ENCODE measurements at regions of chr2 and their contacts with region 1.

Region 1: DNA sequence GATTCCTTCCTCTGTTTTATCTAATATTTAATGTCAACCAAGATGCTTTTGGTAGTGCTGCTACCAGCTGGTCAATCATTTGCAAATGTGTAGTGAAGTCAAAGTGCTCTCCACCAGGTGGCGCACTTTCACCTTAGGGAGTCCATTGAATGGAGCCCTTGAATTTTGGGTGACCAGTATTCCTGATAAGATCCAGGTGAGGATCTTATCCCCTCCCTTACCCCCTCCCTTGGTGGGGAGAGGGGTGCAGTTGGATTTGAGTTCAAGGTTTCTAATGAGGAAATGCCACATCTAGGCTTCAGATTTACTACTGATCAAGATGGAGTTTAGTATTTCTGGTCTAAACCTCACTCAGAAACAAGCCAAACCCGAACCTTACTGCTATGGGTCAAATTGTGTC is 12.0 kb upstream of the E2F6 start:
- DNase-seq: peak; percentile 65
- H3K4me3 Mint-ChIP-seq: no peak overlapping the region
- H3K27ac Mint-ChIP-seq: no peak overlapping the region
- H3K4me1 Mint-ChIP-seq: peaks cover under 1% of the 10 kb centered on the region
- H3K27me3 Mint-ChIP-seq: peaks cover 29% of the 10 kb centered on the region

Region 2: GRCh38 chr2:11553661-11554398 is 75.8 kb after region 1 on chr2:
- intact Hi-C with region 1: no loop called
- DNase-seq: no peak
- H3K4me3 Mint-ChIP-seq: no peak overlapping the region
- H3K27ac Mint-ChIP-seq: no peak overlapping the region
- H3K4me1 Mint-ChIP-seq: peaks cover 6% of the 10 kb centered on the region
- H3K27me3 Mint-ChIP-seq: peaks cover 37% of the 10 kb centered on the region

Region 3: DNA sequence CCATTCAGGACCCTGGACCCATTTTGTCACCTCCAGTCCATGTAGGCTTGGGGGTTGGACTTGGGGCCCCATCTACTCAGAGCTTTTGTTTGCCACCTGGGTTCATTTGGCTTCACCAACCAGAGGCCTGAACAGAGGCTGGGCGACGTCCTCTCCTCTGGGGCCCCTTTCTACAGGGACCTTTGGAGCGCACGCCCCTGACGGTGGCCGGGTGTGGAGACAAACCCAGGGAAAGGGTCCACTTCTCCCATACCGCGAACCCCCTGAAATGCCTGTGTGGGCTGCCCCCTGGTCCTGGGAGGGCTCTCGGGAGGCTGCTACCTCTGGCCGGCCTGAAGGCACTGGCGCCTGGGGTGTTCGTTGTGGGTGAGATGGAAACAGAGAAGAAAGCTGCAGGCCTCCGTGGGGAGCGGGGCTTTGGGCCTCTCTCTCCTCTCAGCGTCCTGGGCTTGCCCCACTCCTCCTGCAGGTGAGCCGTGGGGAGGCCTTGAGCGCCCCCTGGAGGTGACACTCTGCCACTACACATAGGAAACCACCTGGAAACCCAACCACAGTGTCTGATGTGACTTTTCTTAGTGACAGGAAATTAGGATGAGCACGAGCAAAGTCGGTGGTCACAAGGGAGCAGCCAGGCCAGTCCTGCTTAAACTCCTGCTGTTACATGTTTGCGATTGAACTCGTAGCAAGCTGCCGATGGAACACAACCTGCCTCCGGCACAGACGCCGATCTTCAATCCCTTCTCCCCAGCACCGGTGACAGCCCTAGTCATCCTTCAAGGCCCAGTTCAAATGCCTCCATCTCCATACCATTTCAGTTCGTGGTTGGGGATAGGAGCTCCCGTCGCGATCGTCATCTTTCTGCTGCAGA is 204.0 kb after region 1 on chr2:
- intact Hi-C with region 1: loop called (anchors 5 kb)
- DNase-seq: peak; percentile 52
- H3K4me3 Mint-ChIP-seq: no peak overlapping the region
- H3K27ac Mint-ChIP-seq: no peak overlapping the region
- H3K4me1 Mint-ChIP-seq: peaks cover 5% of the 10 kb centered on the region
- H3K27me3 Mint-ChIP-seq: peaks cover 29% of the 10 kb centered on the region

Measured in activated T-helper 2 cell treated with anti-CD3 and anti-CD28 coated beads, Interferon-gamma antibody, Interleukin-2, Interleukin-4, amounts not matched to agents 10 μg/mL and 5 μg/mL and 100 μg/mL, durations not matched to agents 14 hours and 24 hours and 36 hours (primary cell).